GM13976 (cell line): ENCODE measurements at regions of chr17 and their contacts with region 1.

Region 1: DNA sequence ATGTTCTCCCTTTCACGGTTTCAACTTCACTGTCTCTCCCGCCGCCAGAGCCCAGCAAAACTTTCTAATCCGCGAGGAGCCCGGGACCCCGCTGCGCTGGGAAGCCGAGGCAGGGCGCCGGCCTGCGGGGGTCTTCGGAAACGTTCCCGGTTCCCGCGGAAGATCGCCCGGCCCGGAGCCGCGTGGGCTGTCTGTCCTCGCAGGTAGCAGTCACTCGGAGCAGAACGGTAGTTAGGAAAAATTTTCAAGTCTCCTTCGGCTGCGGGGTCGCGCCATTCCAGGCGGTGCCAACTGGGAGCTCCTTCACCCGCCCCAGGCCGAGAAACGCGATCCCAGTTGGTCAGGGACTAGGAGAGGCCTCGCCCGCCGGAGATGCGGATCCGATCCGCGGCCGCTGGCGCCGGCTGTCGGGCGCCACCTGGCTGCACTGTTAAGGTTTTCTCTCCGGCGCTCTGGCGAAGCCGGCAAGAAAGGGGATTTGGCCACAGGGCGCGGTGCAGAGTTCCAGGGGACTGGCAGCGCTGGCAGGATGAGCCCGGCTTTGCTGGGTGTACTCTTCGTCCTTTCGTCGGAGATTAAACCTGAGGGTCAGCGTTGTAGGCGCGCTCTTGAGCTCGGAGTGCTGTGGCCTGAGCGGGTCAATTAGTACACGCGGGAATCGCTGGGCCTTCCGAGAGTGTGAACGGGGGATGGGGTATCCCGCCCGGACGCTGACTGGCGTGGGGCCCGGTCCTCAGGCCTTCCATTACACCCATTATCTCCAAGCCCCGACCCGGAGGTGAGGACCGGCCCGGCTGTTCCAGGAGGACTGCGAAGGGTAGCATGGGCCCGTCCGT is 135.4 kb downstream of the KCNJ12 start:
- DNase-seq: peak; percentile 77
- CTCF ChIP-seq: peak; percentile 60

Region 2: GRCh38 chr17:21119247-21119918 is 392.2 kb before region 1 on chr17:
- in situ Hi-C with region 1: loop called (anchors 25 kb)
- DNase-seq: peak; percentile 80
- CTCF ChIP-seq: peak; percentile 92

Region 3: DNA sequence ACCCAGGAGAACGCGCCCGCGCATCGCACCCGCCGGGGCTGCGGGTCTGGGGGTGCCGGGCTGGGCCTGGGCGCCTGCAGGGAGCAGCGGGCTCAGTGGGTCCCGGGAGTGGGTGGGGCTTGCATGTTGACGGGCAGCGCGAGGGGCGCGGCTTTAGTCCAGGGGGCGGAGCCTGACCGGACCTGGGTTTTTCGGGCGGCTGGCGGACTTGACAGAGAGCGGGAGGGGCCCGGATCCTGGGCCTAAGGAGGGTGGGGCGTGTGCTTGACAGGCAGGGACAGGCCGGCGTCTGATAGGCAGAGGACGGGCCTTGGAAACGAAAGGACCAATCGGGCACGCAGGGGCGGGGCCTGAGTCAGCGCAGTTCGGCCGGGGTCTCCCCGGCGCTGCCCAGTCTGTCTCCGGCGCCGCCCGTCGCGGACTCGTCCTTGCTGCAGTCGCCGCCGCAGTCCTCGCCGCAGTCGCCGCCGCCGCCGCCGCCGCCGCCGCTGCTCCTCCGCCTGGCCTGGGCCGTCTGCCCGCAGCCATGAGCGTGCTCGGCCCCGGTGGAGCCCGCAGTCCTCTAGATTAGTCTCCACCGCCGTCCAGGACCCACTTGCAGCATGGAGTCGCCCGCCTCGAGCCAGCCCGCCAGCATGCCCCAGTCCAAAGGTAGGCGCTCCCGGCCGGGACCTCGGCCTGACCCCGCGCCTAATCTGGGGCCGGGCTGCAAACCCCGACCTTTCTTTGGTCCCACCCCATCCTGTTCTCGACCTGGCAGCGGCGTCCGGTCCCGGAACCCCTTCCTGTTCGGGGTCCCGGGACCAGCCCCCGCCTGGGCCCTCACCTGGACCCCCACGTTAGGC is 227.0 kb before region 1 on chr17 and contains the start of gene MAP2K3:
- in situ Hi-C with region 1: loop called (anchors 25 kb)
- DNase-seq: peak; percentile 99
- CTCF ChIP-seq: no peak

Region 4: DNA sequence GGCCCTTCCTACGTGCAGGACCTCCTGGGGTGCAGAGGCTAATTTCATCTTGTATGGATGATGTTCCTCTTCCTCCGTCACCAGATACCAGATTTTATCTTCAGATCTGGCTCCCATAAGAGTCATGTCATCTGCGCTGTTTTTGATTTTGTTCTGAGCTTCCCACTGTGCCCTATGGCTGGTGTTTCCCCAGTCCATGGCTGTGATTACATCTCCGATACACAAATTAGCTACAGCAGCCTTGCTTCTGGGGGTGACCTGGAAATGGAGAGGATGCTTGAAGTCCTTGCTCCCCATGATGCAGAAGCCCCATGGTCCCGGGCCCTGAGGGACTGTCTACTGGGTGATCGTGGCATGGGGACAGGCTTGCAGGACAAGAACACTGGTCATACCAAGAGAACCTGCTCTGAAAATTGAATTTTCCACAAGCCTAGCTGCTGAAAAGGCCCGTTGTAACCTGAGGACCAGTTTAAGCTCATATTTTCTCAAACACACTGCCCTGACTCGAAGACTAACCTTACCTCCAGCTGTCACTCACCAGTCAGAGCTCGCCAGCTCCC is 66.4 kb before region 1 on chr17:
- in situ Hi-C with region 1: loop called (anchors 10 kb)
- DNase-seq: no peak
- CTCF ChIP-seq: no peak

Region 5: DNA sequence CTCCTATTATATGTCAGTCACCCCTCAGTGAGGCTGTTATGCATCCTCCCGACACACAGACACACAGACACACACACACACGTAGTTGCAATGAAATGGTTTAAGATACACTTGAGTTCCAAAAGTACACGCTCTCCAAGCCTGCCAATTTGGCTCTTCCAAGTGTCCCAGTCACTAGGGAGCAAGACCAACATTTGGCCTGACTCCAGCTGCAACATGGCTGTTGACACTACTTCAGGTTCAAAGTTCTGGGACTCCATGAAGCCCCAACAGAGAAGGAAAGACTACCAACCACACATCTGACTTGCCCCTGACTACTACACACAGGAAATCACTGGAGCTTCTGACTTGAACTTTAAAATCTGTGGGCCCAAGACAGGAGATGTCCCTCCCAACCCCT is 52.7 kb after region 1 on chr17:
- in situ Hi-C with region 1: no loop called
- DNase-seq: no peak
- CTCF ChIP-seq: no peak

Region 6: GRCh38 chr17:21592774-21593173 is 81.2 kb after region 1 on chr17:
- in situ Hi-C with region 1: no loop called
- DNase-seq: no peak
- CTCF ChIP-seq: no peak

Region 7: GRCh38 chr17:22090263-22090935 is 578.8 kb after region 1 on chr17:
- in situ Hi-C with region 1: no loop called
- DNase-seq: no peak
- CTCF ChIP-seq: no peak